Heart right ventricle (tissue), 16 donors: ENCODE measurements at regions of chr10 and their contacts with region 1.

Region 1: DNA sequence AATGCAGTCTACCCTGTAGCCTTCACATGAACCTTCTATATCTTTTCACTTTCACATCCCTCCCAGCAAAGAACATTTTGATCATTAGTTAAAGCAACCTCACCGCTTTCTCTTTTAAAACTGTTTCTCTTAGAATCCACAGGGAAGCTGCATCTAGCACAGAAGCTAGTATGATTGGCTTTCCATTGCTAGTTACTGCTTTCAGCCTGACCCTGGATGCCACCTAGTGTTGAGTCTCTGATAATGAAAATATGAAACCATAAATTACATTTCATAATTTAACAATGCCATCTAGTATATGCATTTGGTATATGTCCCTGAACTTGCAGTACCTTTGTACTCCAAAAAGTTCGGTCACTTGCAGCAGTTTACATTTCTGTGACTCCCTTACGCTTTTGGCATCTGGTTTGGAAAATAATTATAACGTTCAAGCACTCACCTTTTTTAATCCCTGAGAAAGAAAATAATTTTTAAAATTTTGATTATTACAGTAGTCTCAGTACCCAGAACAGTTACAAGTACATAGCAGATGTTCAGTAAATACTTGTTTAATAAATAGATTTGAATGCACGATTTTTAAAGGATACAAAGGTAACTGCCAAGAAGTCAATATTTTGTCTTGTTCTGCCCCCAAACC is 22.7 kb downstream of the CISD1 start:
- DNase-seq: no peak
- ATAC-seq: peak in 7 of 8 donors; percentile 33 to 75 (median 63)
- H3K4me3 ChIP-seq: no peak overlapping the region
- H3K27ac ChIP-seq: no peak overlapping the region
- H3K4me1 ChIP-seq: no peaks in the 10 kb centered on the region
- H3K27me3 ChIP-seq: no peaks in the 10 kb centered on the region
- CTCF ChIP-seq: peak; percentile 55 to 84 (median 76)

Region 2: GRCh38 chr10:58177362-58177947 is 114.2 kb before region 1 on chr10:
- intact Hi-C with region 1: loop called (anchors 1 to 5 kb)
- DNase-seq: no peak
- ATAC-seq: no peak
- H3K4me3 ChIP-seq: no peak overlapping the region
- H3K27ac ChIP-seq: no peak overlapping the region
- H3K4me1 ChIP-seq: no peaks in the 10 kb centered on the region
- H3K27me3 ChIP-seq: no peaks in the 10 kb centered on the region
- CTCF ChIP-seq: peak; percentile 40 to 77 (median 70)

Region 3: DNA sequence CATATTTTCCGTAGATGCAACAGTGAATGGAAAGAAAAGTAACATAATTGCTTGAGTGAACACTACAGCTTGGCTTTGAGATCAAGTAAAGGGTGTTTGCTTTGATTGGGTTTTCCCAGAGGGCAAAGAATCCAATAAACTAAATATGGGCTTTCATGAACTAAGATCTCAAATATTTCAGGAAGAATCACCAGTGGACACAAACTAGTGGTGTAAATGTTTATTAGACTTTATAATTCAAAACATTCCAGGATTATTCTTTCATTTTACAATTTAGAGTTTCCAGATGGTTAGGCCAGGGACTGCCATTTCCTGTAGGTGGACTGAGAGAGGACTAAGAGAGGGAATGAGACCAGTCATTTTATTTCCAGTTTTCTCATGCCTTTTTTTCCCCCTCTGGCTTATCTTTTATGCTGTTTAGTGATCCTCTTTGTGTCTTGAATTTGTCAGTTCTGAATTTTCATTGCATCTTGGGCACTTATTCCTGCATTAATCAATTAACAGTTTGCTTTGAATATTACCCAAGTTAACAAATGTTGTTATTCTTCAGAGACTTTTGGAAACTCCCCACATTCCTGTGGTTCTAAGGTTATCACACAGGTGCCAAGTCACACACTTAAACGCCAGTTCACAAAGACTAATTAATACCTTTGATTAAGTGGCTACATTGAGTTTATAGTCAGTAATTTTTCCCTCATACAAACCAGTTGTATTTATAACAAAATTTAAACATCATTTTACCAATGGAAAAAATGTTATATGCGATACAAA is 10.5 kb before region 1 on chr10:
- intact Hi-C with region 1: loop called in 1 of 10 experiments (anchors 1 kb)
- DNase-seq: no peak
- ATAC-seq: no peak
- H3K4me3 ChIP-seq: no peak overlapping the region
- H3K27ac ChIP-seq: no peak overlapping the region
- H3K4me1 ChIP-seq: peaks cover 0 to 18% (median 0%) of the 10 kb centered on the region in 9 donors
- H3K27me3 ChIP-seq: no peaks in the 10 kb centered on the region
- CTCF ChIP-seq: no peak